ENCODE measurements at regions of chr6 and their contacts with region 1.

Region 1: DNA sequence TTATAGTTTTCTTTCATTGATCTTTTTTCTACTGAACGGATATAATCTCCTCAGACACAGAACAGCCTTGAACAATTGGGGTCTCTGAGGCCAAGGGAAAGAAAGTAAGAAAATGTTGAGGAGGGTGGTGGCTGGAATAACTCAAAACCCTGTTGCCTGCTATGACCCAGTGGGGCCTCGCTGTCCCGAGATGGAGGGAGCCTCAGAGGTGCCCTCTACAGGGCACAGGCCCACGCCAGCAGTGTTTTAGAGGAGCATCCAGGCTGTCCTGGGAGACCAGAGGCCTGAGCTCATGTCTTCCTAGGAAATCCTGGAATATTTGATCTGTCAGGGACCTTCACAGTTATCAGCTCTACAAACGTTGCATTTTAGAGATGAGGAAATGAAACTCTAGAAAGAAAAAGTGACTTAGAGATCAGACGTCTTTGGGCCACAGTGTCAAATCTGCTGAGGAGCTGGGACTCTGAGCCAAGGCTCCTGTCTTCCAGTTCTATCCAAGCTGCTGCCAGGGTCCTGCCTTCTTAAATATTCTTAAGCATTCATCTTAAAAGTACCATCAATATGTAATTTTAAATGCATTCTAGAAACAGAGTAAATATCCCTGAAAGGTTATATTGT is 26.3 kb downstream of the ALDH5A1 start:
- DNase-seq: peak; percentile 62
- ATAC-seq: peak; percentile 100
- H3K4me3 ChIP-seq: no peak overlapping the region
- H3K27ac ChIP-seq: no peak overlapping the region
- H3K4me1 ChIP-seq: no peaks in the 10 kb centered on the region; the same call in 1 of the 2 replicates
- H3K27me3 ChIP-seq: no peaks in the 10 kb centered on the region
- CTCF ChIP-seq: peak; percentile 93
- EP300 ChIP-seq: no peak
- POLR2A ChIP-seq: no peak
- RAD21 ChIP-seq: peak; percentile 87

Region 2: DNA sequence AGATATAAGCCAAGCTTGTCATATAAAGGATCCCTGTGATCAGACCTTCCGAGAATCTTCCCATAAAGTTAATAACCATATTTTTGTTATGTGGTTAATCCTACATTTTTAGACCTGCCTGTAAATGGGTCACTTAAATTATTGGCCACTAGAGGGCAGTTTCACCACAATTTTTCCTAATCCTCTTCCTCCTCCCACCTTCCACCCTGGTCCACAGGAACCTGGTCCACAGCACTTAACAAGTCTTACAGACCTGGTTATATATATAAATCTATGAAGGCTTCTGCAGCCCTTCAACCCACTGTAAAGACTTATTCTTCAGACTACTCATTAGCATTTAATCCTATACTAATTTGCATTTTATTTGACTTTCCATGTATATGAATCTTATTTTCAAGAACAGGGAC is 90.0 kb before region 1 on chr6:
- CTCF ChIA-PET with region 1: interaction called, 27 read pairs
- POLR2A ChIA-PET with region 1: no interaction called
- in situ Hi-C with region 1: loop called (anchors 5 kb)
- intact Hi-C with region 1: loop called (anchors 1 kb)
- DNase-seq: peak; percentile 65
- ATAC-seq: peak; percentile 82
- H3K4me3 ChIP-seq: no peak overlapping the region
- H3K27ac ChIP-seq: no peak overlapping the region
- H3K4me1 ChIP-seq: no peaks in the 10 kb centered on the region
- H3K27me3 ChIP-seq: no peaks in the 10 kb centered on the region
- CTCF ChIP-seq: peak; percentile 76
- EP300 ChIP-seq: no peak
- POLR2A ChIP-seq: no peak
- RAD21 ChIP-seq: peak; percentile 56; the same call in 1 of the 2 replicates